ENCODE measurements at regions of chr20 and their contacts with region 1.

Region 1: GRCh38 chr20:59439243-59439642 is 138.8 kb downstream of the EDN3 start:
- DNase-seq: no peak
- ATAC-seq: peak; percentile 84
- H3K4me3 ChIP-seq: no peak overlapping the region
- H3K27ac ChIP-seq: no peak overlapping the region
- H3K4me1 ChIP-seq: no peaks in the 10 kb centered on the region
- H3K27me3 ChIP-seq: peaks cover 4 to 62% of the 10 kb centered on the region in 2 experiments; a peak in 4 of 5 replicates
- CTCF ChIP-seq: peak; percentile 47
- EP300 ChIP-seq: no peak
- POLR2A ChIP-seq: no peak
- RAD21 ChIP-seq: no peak

Region 2: GRCh38 chr20:59495894-59496510 is 56.8 kb after region 1 on chr20:
- CTCF ChIA-PET with region 1: no interaction called
- POLR2A ChIA-PET with region 1: no interaction called
- in situ Hi-C with region 1: no loop called
- intact Hi-C with region 1: loop called (anchors 1 kb)
- DNase-seq: peak; percentile 64
- ATAC-seq: peak; percentile 87
- H3K4me3 ChIP-seq: no peak overlapping the region
- H3K27ac ChIP-seq: no peak overlapping the region
- H3K4me1 ChIP-seq: no peaks in the 10 kb centered on the region
- H3K27me3 ChIP-seq: peaks cover 6 to 33% of the 10 kb centered on the region in 2 experiments
- CTCF ChIP-seq: peak; percentile 92
- EP300 ChIP-seq: no peak
- POLR2A ChIP-seq: no peak
- RAD21 ChIP-seq: peak; percentile 76

Measured in HepG2 (cell line).